ENCODE measurements at regions of chr4 and their contacts with region 1.

Region 1: GRCh38 chr4:23373261-23373660 is 516.6 kb downstream of the PPARGC1A start:
- DNase-seq: peak; percentile 72 to 83
- H3K4me3 ChIP-seq: no peak overlapping the region
- H3K27ac ChIP-seq: no peak overlapping the region
- H3K4me1 ChIP-seq: no peaks in the 10 kb centered on the region; the same call in 1 of the 2 replicates
- H3K27me3 ChIP-seq: no peaks in the 10 kb centered on the region
- CTCF ChIP-seq: no peak

Region 2: DNA sequence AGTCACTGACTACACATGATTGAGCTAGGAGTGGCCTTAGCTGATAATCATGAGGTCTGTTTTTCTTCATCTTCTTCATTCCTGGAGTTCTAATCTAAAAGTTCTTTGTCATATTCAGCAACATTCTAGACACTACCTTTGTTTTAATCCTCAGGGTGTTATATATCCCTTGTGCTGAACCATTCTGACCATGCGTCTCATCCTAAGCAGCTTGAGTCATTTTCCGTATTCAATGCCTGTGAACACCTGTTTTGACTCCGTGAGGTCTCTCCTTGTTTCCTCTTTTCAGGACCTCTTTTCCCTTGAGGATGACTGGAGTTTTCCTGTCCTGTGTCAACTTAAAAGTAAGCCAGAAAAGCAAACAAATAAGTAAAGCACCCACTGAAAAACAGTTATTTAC is 82.6 kb before region 1 on chr4:
- CTCF ChIA-PET with region 1: no interaction called
- POLR2A ChIA-PET with region 1: no interaction called
- intact Hi-C with region 1: loop called (anchors 2 kb)
- DNase-seq: peak; percentile 50 to 78
- H3K4me3 ChIP-seq: no peak overlapping the region
- H3K27ac ChIP-seq: peak overlapping the region; percentile 93
- H3K4me1 ChIP-seq: peaks cover 22% of the 10 kb centered on the region
- H3K27me3 ChIP-seq: no peaks in the 10 kb centered on the region
- CTCF ChIP-seq: no peak